Activated CD4-positive, alpha-beta memory T cell treated with anti-CD3 and anti-CD28 coated beads for 36 hours (primary cell): ENCODE measurements at regions of chr13 and their contacts with region 1.

Region 1: DNA sequence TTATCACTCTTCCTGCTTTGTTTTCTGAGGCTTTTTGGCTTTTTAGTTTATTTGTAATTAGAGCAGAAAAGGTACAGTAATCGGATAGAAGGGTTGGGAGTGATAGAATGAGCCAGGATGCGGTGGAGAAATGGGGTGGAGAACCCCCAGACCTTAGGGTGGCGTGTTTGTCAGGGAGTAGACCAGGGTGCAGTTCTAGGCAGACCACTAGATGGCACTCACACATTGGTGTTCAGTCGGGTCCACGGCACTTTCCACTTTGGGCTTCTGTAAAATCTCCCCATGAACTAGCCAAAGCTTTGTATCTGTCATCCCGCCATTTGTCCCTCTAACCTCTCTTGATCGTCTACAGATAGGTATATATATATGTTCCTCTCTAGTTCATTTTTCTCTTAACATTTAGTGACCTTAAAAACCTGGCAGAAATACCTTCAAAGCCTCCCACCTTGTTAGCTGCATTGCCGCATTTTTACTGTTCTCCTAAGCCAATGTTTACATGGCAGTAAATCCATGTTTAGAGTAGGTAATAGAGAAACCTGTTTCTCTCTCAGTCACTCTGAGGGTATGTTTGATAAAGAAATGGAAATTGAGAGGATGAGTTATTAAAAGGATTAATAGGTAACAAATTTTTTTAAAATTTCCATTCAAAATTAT is 154.9 kb downstream of the TM9SF2 start:
- DNase-seq: peak; percentile 88
- H3K4me3 Mint-ChIP-seq: no peak overlapping the region
- H3K27ac Mint-ChIP-seq: peak overlapping the region; percentile 38
- H3K4me1 Mint-ChIP-seq: peaks cover 42% of the 10 kb centered on the region
- H3K27me3 Mint-ChIP-seq: no peaks in the 10 kb centered on the region

Region 2: DNA sequence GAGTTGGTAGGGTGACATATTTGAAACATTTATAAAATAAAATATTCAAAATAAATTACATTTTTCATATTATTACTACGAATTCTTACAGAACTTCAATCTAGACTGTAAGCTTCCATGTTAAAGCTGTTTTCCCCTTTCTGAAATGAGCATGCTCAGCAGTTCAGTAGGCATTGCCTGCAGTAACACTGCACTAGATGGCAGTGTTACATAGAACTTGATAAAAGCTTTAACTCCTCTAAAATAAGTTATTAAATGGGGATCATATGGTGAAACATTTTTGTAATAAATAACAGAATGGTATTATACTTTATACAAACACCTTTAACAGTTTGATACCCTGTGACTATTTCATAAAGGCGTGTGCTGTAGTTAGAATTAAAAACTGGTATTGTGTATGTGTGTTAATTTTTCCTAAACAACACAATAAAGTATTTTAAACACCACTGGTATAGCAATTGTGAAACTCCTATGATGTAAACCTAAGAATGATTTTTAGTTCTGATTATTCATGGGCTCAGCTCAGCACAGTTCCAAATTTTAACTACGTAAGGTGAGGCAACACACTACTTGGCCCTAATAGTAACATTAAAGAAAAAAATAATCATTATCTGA is 386.5 kb before region 1 on chr13:
- CTCF ChIA-PET with region 1: no interaction called
- POLR2A ChIA-PET with region 1: no interaction called
- intact Hi-C with region 1: loop called (anchors 5 kb)
- DNase-seq: no peak
- H3K4me3 Mint-ChIP-seq: no peak overlapping the region
- H3K27ac Mint-ChIP-seq: peak overlapping the region; percentile 62
- H3K4me1 Mint-ChIP-seq: peaks cover 62% of the 10 kb centered on the region
- H3K27me3 Mint-ChIP-seq: no peaks in the 10 kb centered on the region

Region 3: GRCh38 chr13:99774659-99775058 is 118.4 kb after region 1 on chr13:
- CTCF ChIA-PET with region 1: no interaction called
- POLR2A ChIA-PET with region 1: no interaction called
- intact Hi-C with region 1: no loop called
- DNase-seq: no peak
- H3K4me3 Mint-ChIP-seq: no peak overlapping the region
- H3K27ac Mint-ChIP-seq: no peak overlapping the region
- H3K4me1 Mint-ChIP-seq: no peaks in the 10 kb centered on the region
- H3K27me3 Mint-ChIP-seq: no peaks in the 10 kb centered on the region

Region 4: GRCh38 chr13:99821741-99822140 is 165.5 kb after region 1 on chr13:
- CTCF ChIA-PET with region 1: interaction called, 8 read pairs
- POLR2A ChIA-PET with region 1: no interaction called
- intact Hi-C with region 1: loop called (anchors 5 kb)
- DNase-seq: no peak
- H3K4me3 Mint-ChIP-seq: no peak overlapping the region
- H3K27ac Mint-ChIP-seq: no peak overlapping the region
- H3K4me1 Mint-ChIP-seq: peaks cover 16% of the 10 kb centered on the region
- H3K27me3 Mint-ChIP-seq: no peaks in the 10 kb centered on the region

Region 5: GRCh38 chr13:99909824-99910619 is 253.8 kb after region 1 on chr13:
- CTCF ChIA-PET with region 1: interaction called, 7 read pairs
- POLR2A ChIA-PET with region 1: no interaction called
- intact Hi-C with region 1: loop called (anchors 1 kb)
- DNase-seq: no peak
- H3K4me3 Mint-ChIP-seq: no peak overlapping the region
- H3K27ac Mint-ChIP-seq: no peak overlapping the region
- H3K4me1 Mint-ChIP-seq: peaks cover 19% of the 10 kb centered on the region
- H3K27me3 Mint-ChIP-seq: peaks cover 21% of the 10 kb centered on the region

Region 6: DNA sequence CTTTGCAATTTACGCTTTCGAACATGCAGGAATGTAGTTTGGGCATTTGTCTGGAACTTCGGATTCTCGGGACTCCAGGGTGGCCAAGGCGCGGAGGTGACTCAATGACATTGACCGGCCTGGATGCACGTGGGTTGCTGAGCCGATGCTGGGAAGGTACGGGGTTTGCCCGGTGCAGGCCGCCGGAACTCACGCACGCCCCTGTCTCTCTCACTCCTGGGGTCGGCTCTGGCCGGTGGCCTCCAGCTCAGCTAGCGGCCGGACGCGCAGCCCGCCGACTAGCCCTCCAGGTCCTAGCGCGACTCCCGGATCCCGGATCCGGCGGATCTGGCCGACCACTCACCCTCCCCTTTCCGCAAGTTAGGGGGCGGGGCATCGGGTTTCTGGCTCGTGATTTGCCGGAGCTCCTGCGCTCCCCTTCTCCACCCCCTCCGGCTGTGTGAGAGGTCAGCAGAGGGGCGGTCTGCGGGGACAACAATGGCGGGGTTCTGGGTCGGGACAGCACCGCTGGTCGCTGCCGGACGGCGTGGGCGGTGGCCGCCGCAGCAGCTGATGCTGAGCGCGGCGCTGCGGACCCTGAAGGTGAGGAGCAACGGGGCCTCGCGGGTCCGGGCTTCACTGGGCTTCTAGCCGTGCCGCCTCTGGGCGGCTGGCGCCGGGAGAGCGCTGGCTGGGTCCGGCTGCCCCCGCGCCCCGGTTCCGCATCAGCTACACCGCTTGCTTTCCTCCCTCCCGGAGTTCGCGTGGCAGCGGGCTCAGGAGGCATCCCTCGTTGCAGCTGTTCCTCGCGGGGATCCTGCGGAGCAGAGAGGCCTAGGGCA is 432.6 kb after region 1 on chr13 and contains the start of gene PCCA:
- CTCF ChIA-PET with region 1: interaction called, 3 read pairs
- POLR2A ChIA-PET with region 1: no interaction called
- intact Hi-C with region 1: loop called (anchors 2 kb)
- DNase-seq: peak; percentile 90
- H3K4me3 Mint-ChIP-seq: peak within 1 kb of the TSS; percentile 95
- H3K27ac Mint-ChIP-seq: peak within 1 kb of the TSS; percentile 36
- H3K4me1 Mint-ChIP-seq: peaks cover 20% of the 10 kb centered on the region
- H3K27me3 Mint-ChIP-seq: no peaks in the 10 kb centered on the region
- total RNA-seq, gene PCCA: 7.9 to 8.2 TPM

Region 7: DNA sequence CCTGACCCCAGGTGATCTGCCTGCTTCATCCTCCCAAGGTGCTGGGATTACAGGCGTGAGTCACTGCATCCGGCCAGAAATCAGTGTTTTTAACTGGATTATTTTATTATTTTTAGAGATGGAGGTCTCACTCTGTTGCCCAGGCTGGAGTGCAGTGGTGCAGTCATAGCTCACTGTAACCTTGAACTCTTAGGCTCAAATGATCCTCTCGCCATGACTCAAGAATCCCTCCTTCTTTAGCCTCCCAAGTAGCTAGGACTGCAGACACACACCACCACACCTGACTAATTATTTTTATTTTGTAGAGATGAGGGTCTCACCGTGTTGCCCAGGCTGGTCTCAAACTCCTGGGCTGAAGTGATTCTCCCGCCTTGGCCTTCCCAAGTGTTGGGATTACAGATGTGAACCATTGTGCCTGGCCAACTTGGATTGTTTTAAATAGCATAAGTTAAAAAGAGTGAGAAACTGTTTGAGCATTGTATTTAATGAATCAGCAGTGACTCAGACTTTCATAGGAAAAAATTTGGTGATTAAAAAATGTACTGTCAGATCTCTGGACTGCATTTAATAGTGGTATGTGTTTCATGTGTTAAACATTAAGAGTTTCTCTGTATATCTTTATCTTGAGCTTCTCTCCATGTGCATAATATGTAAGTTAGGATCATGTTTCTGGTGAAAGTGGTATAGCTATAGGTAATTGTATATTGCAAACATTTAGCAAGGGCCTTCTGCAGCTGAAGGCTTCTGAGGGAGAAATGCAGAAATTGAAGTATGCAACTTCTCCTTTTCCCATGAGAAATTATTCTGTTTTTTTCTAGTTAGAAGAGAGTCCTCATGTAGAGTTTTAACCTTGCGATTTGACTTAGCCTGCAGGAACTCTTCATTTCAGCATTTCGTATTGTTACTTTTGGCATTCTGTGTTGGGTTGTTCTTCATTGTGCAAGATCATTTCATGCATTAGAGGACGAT is 553.9 kb after region 1 on chr13:
- CTCF ChIA-PET with region 1: no interaction called
- POLR2A ChIA-PET with region 1: no interaction called
- intact Hi-C with region 1: no loop called
- DNase-seq: no peak
- H3K4me3 Mint-ChIP-seq: no peak overlapping the region
- H3K27ac Mint-ChIP-seq: no peak overlapping the region
- H3K4me1 Mint-ChIP-seq: peaks cover 5% of the 10 kb centered on the region
- H3K27me3 Mint-ChIP-seq: no peaks in the 10 kb centered on the region

Region 8: GRCh38 chr13:100514788-100515409 is 858.7 kb after region 1 on chr13:
- CTCF ChIA-PET with region 1: interaction called, 27 read pairs
- POLR2A ChIA-PET with region 1: no interaction called
- intact Hi-C with region 1: loop called (anchors 2 kb)
- DNase-seq: peak; percentile 82
- H3K4me3 Mint-ChIP-seq: no peak overlapping the region
- H3K27ac Mint-ChIP-seq: no peak overlapping the region
- H3K4me1 Mint-ChIP-seq: peaks cover 21% of the 10 kb centered on the region
- H3K27me3 Mint-ChIP-seq: peaks cover 14% of the 10 kb centered on the region